Activated CD4-positive, alpha-beta memory T cell treated with anti-CD3 and anti-CD28 coated beads for 36 hours (primary cell): ENCODE measurements at regions of chr18 and their contacts with region 1.

Region 1: GRCh38 chr18:70205421-70206397 is at the start of gene RTTN:
- DNase-seq: peak; percentile 94
- H3K4me3 Mint-ChIP-seq: peak within 1 kb of the TSS; percentile 92
- H3K27ac Mint-ChIP-seq: peak within 1 kb of the TSS; percentile 99
- H3K4me1 Mint-ChIP-seq: peaks cover 30% of the 10 kb centered on the region
- H3K27me3 Mint-ChIP-seq: peaks cover 5% of the 10 kb centered on the region
- total RNA-seq, gene RTTN: 27.3 to 28.9 TPM

Region 2: DNA sequence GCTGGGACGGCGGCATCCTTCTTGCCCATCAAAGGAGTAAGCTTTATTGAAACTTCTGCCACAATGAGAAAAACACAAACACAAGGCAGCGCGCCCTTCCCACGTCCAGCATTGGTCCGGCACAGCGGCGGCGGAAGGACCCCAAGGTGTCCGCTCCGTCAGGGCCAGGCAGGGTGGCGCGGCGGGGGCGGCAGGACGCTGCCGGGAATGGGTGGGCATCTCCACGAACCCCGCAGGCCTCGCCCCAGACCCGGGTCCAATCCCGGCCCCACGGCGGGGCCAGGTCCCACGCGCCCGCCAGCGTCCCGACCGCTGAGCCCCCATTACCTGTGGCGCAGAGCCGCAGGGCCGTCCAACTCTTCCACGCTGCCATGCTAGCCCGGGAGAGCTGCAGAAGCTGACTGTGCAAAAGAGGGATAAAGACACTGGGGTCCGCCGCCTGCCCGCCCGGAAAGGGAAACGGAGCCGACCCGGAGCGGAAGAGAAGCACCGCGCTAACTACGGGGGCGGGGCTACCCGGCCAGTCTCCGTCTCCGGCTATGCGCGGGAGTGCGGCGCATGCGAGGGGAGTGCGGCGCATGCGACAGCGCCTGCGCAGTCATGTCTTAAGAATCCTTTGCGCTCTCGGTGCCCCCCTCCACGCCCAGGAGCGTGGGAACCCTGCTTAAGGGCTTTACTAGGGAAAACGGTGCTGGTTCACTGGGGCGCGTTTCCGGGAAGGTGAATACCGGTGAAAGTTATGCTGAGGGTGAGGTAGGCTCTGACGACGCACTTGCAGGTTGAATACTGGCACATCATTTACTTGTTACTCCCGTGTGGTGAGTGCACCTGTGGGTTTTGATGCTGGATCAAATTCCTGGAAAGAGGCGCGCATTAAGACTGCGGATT is 1490.9 kb before region 1 on chr18 and contains the start of gene TMX3:
- CTCF ChIA-PET with region 1: no interaction called
- POLR2A ChIA-PET with region 1: no interaction called
- intact Hi-C with region 1: loop called (anchors 1 kb)
- DNase-seq: peak; percentile 94
- H3K4me3 Mint-ChIP-seq: peak within 1 kb of the TSS; percentile 97
- H3K27ac Mint-ChIP-seq: peak within 1 kb of the TSS; percentile 93
- H3K4me1 Mint-ChIP-seq: peaks cover 42% of the 10 kb centered on the region
- H3K27me3 Mint-ChIP-seq: no peaks in the 10 kb centered on the region
- total RNA-seq, gene TMX3: 42.4 to 44.6 TPM

Region 3: GRCh38 chr18:70288851-70289328 is 83.2 kb after region 1 on chr18 and contains the start of gene SOCS6:
- CTCF ChIA-PET with region 1: no interaction called
- POLR2A ChIA-PET with region 1: no interaction called
- intact Hi-C with region 1: loop called (anchors 5 kb)
- DNase-seq: peak; percentile 54
- H3K4me3 Mint-ChIP-seq: peak within 1 kb of the TSS; percentile 77
- H3K27ac Mint-ChIP-seq: peak within 1 kb of the TSS; percentile 49
- H3K4me1 Mint-ChIP-seq: peaks cover 13% of the 10 kb centered on the region
- H3K27me3 Mint-ChIP-seq: peaks cover 44% of the 10 kb centered on the region
- total RNA-seq, gene SOCS6: 0.75 to 1.3 TPM

Region 4: DNA sequence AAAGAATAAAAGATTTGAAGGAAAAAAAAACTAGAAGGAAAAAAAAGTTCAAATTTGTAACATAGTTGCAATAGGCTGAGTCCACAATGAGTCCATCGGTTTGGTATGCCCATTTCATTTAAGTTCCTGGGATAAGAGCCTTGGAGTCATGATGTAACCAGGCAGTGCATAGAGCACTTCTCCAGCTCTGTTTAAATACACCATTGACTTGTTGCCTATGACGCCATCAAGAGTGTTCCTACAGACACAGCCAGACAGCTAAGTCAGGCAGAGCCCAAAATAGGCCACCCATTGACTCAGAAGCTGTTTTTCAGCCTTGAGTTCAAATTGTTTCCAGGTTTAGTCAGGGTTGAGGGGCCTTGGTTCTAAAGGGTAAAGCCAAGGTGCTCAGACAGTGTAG is 128.0 kb after region 1 on chr18:
- CTCF ChIA-PET with region 1: no interaction called
- POLR2A ChIA-PET with region 1: no interaction called
- intact Hi-C with region 1: no loop called
- DNase-seq: no peak
- H3K4me3 Mint-ChIP-seq: no peak overlapping the region
- H3K27ac Mint-ChIP-seq: no peak overlapping the region
- H3K4me1 Mint-ChIP-seq: no peaks in the 10 kb centered on the region
- H3K27me3 Mint-ChIP-seq: no peaks in the 10 kb centered on the region